Ascending aorta (tissue), 2 donors: ENCODE measurements at regions of chr11 and their contacts with region 1.

Region 1: GRCh38 chr11:64659417-64660144 is 63.4 kb downstream of the NRXN2 start:
- DNase-seq: peak in 1 of 2 donors; percentile 83
- H3K4me3 ChIP-seq: peak overlapping the region; percentile 45 to 65
- H3K27ac ChIP-seq: peak overlapping the region; percentile 79 to 89
- H3K4me1 ChIP-seq: peaks cover 11 to 18% of the 10 kb centered on the region in 2 donors
- H3K27me3 ChIP-seq: no peaks in the 10 kb centered on the region
- CTCF ChIP-seq: peak in 1 of 3 experiments; percentile 35

Region 2: DNA sequence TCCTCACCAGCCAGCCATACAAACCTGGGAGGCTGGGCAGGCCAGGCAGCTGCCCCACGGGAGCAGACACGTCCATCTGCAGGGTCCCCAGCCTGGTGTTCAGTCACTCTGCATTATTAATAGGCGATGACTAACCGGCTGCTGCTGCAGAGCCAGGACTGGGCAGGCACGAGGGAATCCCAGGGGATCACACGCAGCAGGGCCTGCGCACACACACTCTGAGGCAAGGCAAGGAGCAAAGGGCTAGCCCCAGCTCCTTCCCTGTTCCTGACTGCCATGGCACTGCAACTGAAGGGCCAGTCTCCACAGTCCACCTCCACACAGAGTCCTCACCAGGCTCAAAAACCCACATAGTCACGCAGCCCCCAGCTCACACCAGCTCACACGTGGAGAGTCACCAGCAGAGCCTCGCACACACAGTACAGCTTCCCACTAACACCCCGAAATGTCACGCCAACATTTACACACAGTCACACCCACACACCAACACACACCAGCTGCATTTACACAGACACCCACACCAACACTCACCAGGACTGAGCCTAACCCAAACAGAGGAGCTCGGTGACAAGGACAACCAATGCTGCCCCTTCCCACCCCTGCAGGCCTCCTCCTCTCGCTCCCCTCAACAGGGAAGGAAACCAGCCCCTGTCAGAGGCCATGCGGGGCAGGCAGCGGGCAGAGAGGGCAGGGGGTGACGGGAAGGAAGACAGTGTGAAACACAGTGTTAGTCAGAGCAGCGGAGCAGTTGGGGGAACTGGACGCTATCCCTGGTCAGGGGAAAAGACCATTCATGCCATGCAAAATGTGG is 16.1 kb after region 1 on chr11:
- intact Hi-C with region 1: loop called (anchors 1 kb)
- DNase-seq: peak; percentile 86 to 94
- H3K4me3 ChIP-seq: no peak overlapping the region
- H3K27ac ChIP-seq: peak overlapping the region; percentile 76 to 80
- H3K4me1 ChIP-seq: peaks cover 6 to 15% of the 10 kb centered on the region in 2 donors
- H3K27me3 ChIP-seq: no peaks in the 10 kb centered on the region
- CTCF ChIP-seq: no peak

Region 3: DNA sequence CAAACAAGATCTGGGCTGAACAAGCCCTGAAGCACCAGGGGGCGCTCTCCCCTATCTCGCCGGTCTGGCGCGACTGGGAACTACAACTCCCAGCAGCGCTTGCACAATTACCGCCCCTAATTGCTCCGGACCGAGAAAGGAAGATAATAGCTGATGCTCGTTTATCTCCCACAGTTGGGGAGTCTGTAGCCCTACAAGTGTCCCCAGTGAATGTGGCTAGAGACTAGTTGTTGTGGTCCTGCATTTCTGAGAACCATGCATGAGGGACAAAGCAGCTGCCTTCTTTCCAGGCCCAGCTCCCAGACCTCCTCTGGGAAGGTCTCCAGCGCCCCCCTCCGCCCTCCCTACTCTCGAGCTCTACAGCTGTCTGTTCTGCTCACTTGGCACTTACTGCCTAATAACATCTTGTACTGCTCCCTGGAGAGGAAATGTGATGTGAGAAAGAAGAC is 29.0 kb after region 1 on chr11:
- intact Hi-C with region 1: loop called (anchors 1 kb)
- DNase-seq: peak; percentile 39 to 93
- H3K4me3 ChIP-seq: peak overlapping the region; percentile 28 to 62
- H3K27ac ChIP-seq: peak overlapping the region; percentile 78 to 89
- H3K4me1 ChIP-seq: peaks cover 20 to 24% of the 10 kb centered on the region in 2 donors
- H3K27me3 ChIP-seq: no peaks in the 10 kb centered on the region
- CTCF ChIP-seq: peak; percentile 88 to 92 (median 91)

Region 4: DNA sequence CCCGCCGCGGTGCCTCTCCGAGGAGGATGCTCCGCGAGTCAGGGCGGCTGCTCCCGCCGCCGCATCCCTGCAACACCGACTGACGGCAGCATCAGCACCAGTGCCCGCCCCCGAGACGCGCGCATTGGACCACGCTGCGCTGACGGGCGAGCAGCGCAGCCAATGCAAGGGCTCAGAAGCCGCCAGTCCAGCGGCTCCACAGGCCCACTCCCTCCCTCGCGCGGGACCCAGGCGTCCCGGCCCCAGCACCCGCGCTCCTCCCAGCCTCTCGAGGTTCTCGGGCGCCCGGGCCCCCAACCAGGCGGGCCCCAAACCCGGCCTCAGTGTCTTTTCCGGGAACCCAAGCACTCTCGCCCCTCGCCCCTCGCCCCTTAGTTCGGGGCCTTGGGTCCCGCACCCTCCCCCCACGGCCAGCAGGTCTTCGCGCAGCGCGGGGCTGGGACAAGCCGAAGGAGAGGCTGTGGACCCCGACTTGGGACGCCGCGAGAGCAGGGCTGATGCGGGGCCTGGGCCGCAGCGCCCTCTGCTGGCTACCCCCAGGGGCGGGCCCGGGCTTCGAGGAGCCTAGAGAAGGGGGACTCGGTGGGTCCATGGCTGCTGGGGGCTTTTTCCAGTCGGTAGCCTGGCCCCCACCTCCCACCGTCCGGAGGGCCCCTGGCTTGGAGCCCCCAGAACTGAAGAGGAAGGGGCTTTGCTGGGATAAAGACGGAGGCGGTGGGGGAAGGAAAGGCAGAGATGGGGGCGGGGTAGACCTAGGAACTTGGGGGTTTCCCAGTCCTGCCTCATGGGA is 63.7 kb after region 1 on chr11 and contains the start of gene NRXN2:
- intact Hi-C with region 1: loop called (anchors 1 kb)
- DNase-seq: peak in 1 of 2 donors; percentile 85
- H3K4me3 ChIP-seq: peak within 1 kb of the TSS; percentile 70 to 82
- H3K27ac ChIP-seq: peak within 1 kb of the TSS; percentile 36 to 61
- H3K4me1 ChIP-seq: peaks cover 0 to 7% of the 10 kb centered on the region in 2 donors
- H3K27me3 ChIP-seq: no peaks in the 10 kb centered on the region
- CTCF ChIP-seq: peak; percentile 94 to 100 (median 96)
- total RNA-seq, gene NRXN2: 26.0 TPM

Region 5: GRCh38 chr11:64767344-64768299 is 108.0 kb after region 1 on chr11:
- intact Hi-C with region 1: no loop called
- DNase-seq: peak in 1 of 2 donors; percentile 91
- H3K4me3 ChIP-seq: no peak overlapping the region
- H3K27ac ChIP-seq: peak overlapping the region; percentile 62 to 67
- H3K4me1 ChIP-seq: peaks cover 10 to 39% of the 10 kb centered on the region in 2 donors
- H3K27me3 ChIP-seq: no peaks in the 10 kb centered on the region
- CTCF ChIP-seq: peak; percentile 61 to 76 (median 64)